Mammary epithelial cell (primary cell): ENCODE measurements at regions of chr6 and their contacts with region 1.

Region 1: DNA sequence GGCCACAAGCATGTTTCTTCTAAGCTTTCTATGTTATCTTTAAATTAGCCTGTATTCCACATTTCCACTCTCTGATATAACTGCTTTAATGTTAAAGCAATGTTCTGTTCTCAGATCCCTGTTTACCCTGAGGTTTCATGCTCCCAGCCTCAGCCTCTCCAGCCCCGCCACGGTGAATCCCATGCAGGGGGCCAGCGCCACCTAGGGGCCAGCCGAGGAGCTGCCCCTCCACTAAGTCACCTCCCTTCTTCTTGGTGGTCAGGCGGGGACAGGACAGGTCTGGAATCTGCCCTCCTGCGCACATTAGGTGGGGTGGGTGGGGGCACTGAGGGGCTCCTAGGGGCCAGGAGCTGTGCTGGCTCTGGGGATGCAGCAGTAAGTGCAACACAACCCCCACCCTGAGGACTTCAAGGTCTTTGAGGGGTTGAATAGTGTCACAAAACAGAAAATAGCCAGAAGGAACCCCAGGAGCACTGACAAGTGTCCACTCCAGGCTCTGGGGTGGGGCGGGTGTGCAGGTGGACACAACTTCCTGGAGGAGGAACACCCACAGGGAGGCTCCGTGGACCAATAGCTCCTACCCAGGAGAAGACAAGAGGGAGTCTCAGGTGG is 61.6 kb downstream of the RAB44 start:
- DNase-seq: peak; percentile 58
- H3K4me3 ChIP-seq: no peak overlapping the region
- H3K27ac ChIP-seq: no peak overlapping the region
- H3K4me1 ChIP-seq: peaks cover 4% of the 10 kb centered on the region
- H3K27me3 ChIP-seq: no peaks in the 10 kb centered on the region
- CTCF ChIP-seq: peak; percentile 93 to 98

Region 2: DNA sequence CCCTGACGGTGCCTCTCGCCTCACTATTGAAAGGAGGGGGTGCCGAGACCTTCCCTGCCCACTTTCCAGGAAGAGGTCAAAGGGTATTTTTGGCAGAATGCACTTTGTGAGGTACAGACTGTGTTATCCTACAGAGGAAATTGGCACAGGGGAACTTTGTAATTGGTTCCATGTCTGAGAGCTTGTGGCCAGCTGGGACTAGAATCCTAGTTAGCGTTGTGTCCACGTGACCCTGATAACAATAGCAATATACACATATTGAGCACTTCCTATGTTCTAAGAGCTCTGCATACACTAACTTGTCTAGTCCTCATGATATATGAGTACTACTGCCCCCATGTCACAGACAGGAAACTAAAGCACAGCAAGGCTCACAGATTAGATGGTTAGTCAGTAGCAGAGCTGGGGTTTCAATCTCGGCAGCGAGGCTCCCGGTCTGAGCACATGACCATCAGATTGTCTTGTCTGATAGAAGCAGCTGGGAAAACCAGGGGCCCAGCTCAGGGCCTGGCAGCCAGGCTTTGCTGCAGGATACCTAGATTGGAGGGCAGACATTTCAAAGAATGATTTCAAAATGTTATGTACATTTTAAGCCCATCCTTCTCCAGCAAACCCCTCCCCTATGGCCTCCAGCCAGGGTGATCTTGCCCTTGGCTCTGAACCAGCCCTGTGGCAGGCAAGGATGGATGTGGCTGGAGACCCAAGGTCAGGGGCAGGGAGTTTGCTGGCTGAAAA is 627.6 kb before region 1 on chr6:
- CTCF ChIA-PET with region 1: no interaction called
- dilution Hi-C with region 1: no loop called
- in situ Hi-C with region 1: no loop called
- intact Hi-C with region 1: loop called (anchors 5 kb)
- DNase-seq: no peak
- H3K4me3 ChIP-seq: no peak overlapping the region
- H3K27ac ChIP-seq: no peak overlapping the region
- H3K4me1 ChIP-seq: peaks cover 23% of the 10 kb centered on the region
- H3K27me3 ChIP-seq: no peaks in the 10 kb centered on the region
- CTCF ChIP-seq: no peak

Region 3: DNA sequence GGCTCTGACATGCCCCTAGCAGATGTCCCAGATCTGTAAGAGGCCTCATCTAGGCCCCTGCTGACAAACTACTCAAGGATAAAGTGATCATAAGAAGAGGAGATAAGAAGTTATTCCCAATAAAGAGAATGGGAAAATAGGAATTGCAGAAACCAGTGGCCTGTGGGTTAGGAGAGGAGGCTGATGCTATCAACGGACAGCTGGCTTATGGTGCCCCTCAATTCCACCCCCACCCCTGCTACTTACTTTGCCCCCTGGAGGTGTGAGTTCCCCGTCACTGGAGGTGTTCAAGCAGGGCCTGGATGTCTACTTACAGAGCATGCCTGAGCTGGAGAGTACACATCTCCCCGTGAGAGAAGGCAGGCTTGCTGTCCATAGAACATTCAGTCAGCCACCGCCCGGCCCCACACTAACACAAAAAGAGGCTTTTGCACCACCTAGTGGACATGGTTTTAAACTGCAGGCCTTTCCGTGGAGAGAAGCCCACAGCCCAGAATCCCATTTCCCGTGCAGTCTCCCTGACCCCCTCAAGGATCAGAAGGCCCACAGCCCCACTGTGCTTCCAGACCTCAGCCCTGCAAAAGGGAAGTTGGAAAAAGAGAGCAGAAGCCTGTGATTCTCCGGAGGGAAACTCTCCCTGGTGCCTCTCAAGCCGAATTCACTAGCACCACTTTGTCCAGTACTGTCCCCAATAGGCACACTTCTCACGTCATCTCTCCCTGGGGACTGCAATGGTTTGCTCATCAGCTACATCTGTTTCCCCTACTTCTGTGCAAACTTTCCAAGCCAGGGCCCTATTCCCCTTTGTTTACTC is 398.8 kb before region 1 on chr6:
- CTCF ChIA-PET with region 1: no interaction called
- dilution Hi-C with region 1: no loop called
- in situ Hi-C with region 1: no loop called
- intact Hi-C with region 1: loop called (anchors 1 kb)
- DNase-seq: peak; percentile 47
- H3K4me3 ChIP-seq: no peak overlapping the region
- H3K27ac ChIP-seq: no peak overlapping the region
- H3K4me1 ChIP-seq: no peaks in the 10 kb centered on the region
- H3K27me3 ChIP-seq: no peaks in the 10 kb centered on the region
- CTCF ChIP-seq: peak; percentile 78 to 85

Region 4: DNA sequence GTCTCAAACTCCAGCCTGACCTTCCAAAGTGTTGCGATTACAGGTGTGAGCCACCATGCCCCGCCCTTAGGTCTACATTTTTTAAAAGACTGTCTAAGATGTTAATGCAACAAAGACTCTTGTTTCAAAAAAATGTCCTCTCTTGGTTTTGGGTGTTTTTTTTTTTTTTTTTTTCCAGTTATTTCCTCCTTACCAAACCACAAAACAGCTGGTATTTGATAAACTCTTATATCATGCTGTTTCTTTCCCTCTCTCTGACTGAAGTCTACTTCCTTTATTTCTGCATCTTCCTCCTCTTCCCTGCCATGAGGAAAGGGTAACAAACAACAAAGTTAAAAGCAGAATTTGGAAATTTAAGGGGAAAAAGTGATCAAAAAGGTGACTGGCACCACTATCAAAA is 233.2 kb before region 1 on chr6:
- CTCF ChIA-PET with region 1: interaction called, 11 read pairs
- dilution Hi-C with region 1: no loop called
- in situ Hi-C with region 1: no loop called
- intact Hi-C with region 1: no loop called
- DNase-seq: no peak
- H3K4me3 ChIP-seq: no peak overlapping the region
- H3K27ac ChIP-seq: no peak overlapping the region
- H3K4me1 ChIP-seq: peaks cover 13% of the 10 kb centered on the region
- H3K27me3 ChIP-seq: no peaks in the 10 kb centered on the region
- CTCF ChIP-seq: no peak

Region 5: GRCh38 chr6:36666726-36667591 is 92.3 kb before region 1 on chr6:
- CTCF ChIA-PET with region 1: no interaction called
- dilution Hi-C with region 1: loop called (anchors 5 kb)
- in situ Hi-C with region 1: no loop called
- intact Hi-C with region 1: no loop called
- DNase-seq: peak; percentile 99
- H3K4me3 ChIP-seq: no peak overlapping the region
- H3K27ac ChIP-seq: peak overlapping the region; percentile 60
- H3K4me1 ChIP-seq: peaks cover 15% of the 10 kb centered on the region
- H3K27me3 ChIP-seq: no peaks in the 10 kb centered on the region
- CTCF ChIP-seq: peak in 1 of 2 donors; percentile 14

Region 6: DNA sequence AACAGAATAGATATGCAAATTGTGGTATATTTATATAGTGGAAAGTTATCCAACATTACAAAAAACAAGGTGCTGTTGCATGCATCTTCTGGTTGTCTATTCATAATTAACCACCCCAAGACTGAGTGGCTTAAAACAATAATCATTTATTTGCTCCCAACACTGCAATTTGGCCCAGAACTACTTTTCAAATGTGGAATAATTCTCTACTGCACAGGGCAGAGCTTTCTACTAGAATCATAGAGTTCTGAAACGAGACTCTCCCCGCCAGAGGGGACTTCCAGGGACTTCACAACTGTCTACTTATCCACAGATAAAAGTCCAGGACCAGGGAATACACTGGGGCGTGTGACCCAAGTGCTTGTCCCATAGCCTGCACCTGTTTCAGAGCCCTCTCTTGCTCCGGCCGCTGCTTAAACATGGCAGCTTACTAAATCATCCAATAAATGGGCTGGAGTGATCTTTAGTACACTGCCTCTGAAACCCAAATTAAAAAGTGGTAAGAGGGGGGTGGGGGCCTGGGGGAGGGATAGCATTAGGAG is 70.6 kb before region 1 on chr6:
- CTCF ChIA-PET with region 1: no interaction called
- dilution Hi-C with region 1: no loop called
- in situ Hi-C with region 1: no loop called
- intact Hi-C with region 1: loop called (anchors 2 kb)
- DNase-seq: no peak
- H3K4me3 ChIP-seq: no peak overlapping the region
- H3K27ac ChIP-seq: no peak overlapping the region
- H3K4me1 ChIP-seq: peaks cover 33% of the 10 kb centered on the region
- H3K27me3 ChIP-seq: no peaks in the 10 kb centered on the region
- CTCF ChIP-seq: no peak

Region 7: DNA sequence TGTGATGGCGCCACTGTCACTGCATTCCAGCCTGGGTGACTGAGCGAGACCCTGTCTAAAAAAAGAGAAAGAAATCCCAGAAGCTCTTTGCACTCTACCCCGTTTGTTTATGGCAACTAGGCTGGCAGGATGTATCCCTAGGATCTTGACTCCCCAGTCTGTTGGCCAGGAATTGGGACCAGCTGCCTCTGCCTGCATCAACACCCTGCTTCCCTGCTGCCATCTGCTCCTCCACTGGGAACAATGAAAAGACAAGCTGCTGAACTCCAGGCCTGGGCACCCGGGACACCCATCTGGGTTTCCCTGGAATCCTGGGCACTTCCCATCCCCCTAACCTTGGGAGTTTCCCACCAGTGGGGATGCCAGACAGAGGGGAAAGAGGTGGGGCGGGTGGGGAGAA is 15.1 kb after region 1 on chr6:
- CTCF ChIA-PET with region 1: interaction called, 15 read pairs
- dilution Hi-C with region 1: no loop called
- in situ Hi-C with region 1: no loop called
- intact Hi-C with region 1: no loop called
- DNase-seq: no peak
- H3K4me3 ChIP-seq: no peak overlapping the region
- H3K27ac ChIP-seq: no peak overlapping the region
- H3K4me1 ChIP-seq: peaks cover 11% of the 10 kb centered on the region
- H3K27me3 ChIP-seq: no peaks in the 10 kb centered on the region
- CTCF ChIP-seq: no peak

Region 8: DNA sequence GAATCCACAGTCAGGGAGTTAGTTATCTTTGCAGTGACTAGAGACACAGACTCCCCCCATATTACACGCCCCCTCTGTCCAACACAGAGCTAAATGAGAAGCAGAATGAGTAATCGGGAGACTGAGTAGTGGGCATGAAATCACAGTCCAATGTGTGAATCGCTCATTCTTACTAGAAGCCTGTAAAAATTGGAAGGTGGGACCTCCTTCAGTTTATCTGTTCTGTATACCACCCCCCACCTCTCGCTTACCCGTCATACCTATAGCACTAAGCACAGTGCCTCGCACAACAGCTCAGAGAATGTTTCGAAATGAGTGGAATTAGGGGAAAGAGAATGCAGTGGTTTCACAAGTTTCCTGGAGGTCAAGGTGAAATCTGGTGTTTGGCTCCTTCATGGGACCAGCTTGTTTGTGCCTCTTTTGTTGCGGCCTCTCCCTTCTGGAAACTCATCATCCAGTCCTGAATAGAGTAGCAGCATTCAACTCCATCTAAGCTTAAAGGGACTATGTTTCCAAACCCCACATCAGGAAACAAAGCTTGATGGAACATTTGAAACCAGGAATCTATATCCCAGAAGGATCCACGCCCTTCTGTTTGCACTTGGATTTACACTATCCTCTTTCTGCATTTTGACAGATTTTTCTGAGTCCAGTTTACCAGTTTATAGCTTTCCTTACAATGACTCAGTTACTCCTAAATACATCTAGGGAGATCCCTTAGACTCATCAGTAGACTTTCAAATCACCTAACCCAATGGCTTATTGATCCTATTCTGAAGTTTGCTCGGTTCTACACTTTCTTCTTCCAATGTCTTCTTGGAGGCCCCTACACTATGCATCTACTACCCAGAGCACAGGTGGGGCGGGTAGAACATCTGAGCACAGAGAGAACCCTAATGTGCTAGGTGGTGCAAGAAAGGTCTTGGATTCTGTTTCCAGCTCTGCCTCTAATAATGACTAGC is 351.5 kb after region 1 on chr6:
- CTCF ChIA-PET with region 1: no interaction called
- dilution Hi-C with region 1: no loop called
- in situ Hi-C with region 1: no loop called
- intact Hi-C with region 1: no loop called
- DNase-seq: no peak
- H3K4me3 ChIP-seq: no peak overlapping the region
- H3K27ac ChIP-seq: no peak overlapping the region
- H3K4me1 ChIP-seq: no peaks in the 10 kb centered on the region
- H3K27me3 ChIP-seq: no peaks in the 10 kb centered on the region
- CTCF ChIP-seq: no peak